Calu3 (cell line): ENCODE measurements at regions of chr1 and their contacts with region 1.

Region 1: GRCh38 chr1:48055876-48056764 is 58.9 kb upstream of the TRABD2B start:
- DNase-seq: no peak
- H3K4me3 Mint-ChIP-seq: no peak overlapping the region
- H3K27ac Mint-ChIP-seq: no peak overlapping the region
- H3K4me1 Mint-ChIP-seq: peaks cover 10% of the 10 kb centered on the region
- H3K27me3 Mint-ChIP-seq: peaks cover 66% of the 10 kb centered on the region
- CTCF ChIP-seq: no peak

Region 2: GRCh38 chr1:47941609-47942239 is 114.4 kb before region 1 on chr1:
- CTCF ChIA-PET with region 1: no interaction called
- intact Hi-C with region 1: no loop called
- DNase-seq: peak; percentile 28
- H3K4me3 Mint-ChIP-seq: no peak overlapping the region
- H3K27ac Mint-ChIP-seq: peak overlapping the region; percentile 96
- H3K4me1 Mint-ChIP-seq: peaks cover 55% of the 10 kb centered on the region
- H3K27me3 Mint-ChIP-seq: no peaks in the 10 kb centered on the region
- CTCF ChIP-seq: peak; percentile 20

Region 3: DNA sequence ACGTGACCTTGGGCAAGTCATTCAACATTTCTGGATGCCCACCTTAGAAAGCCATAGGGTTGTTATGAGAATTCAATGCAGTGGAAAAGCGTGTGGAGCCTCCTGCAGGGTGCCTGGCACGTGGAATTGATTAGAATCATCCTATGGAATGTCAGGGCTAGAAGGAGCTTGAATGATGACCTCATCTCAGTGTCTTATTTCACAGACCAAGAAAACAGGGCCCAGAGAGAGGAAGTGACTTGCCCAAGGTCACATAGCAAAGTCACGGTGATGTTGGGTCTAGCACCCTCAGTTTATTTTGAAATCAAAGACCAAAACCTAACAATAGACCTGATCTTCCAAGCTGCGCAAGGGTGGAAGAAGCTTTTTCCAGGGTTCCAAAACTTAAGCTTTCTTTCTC is 64.9 kb before region 1 on chr1:
- CTCF ChIA-PET with region 1: interaction called, 10 read pairs
- intact Hi-C with region 1: loop called (anchors 5 kb)
- DNase-seq: no peak
- H3K4me3 Mint-ChIP-seq: no peak overlapping the region
- H3K27ac Mint-ChIP-seq: no peak overlapping the region
- H3K4me1 Mint-ChIP-seq: peaks cover 17% of the 10 kb centered on the region
- H3K27me3 Mint-ChIP-seq: peaks cover 43% of the 10 kb centered on the region
- CTCF ChIP-seq: no peak